Activated CD4-positive, alpha-beta T cell treated with anti-CD3 and anti-CD28 coated beads, Interleukin-2, amount 10 ng/mL, durations not matched to agents 24 days and 14 days (primary cell): ENCODE measurements at regions of chr10 and their contacts with region 1.

Region 1: DNA sequence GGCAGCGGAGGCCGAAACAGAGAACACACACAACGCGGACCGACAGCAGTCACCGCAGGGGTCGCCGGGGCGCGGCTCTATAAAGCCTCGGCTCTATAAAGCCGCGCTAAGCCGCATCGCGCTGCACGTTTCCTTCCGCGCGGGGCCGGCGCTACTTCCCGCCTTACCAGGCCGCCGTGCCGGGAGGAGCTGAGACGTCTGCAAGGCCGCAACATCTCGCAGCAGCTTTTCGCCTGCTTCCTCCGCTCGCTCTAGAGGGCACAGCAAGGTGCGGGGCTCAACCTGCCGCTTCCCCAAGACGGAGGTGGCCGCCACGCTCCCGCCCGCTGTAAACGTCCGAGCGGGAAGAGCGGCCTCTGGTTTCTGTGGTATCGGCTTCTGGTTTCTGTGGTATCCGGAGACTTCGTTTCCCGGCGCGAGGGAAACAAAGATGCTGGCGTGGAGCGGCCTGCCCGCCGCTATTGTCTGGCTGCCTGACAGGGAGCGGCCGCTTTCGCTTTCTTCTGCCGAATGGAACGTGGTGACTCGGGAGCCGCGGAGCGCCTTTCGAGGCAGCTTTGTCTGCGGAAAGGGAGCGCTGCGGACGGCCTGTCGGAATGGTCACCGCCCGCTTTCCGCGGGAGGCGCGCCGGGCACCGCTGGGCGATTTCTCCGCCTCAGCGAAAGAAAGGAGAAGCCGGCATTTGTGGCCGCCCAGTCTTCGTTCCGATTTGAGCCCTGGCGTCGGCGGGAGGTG is 91.8 kb downstream of the SPAG6 start:
- DNase-seq: peak; percentile 94
- H3K4me3 Mint-ChIP-seq: peak overlapping the region; percentile 93
- H3K27ac Mint-ChIP-seq: peak overlapping the region; percentile 98
- H3K4me1 Mint-ChIP-seq: peaks cover 47% of the 10 kb centered on the region
- H3K27me3 Mint-ChIP-seq: peaks cover 12% of the 10 kb centered on the region

Region 2: GRCh38 chr10:21525367-21526183 is 911.5 kb before region 1 on chr10 and contains the start of gene SKIDA1:
- intact Hi-C with region 1: loop called (anchors 10 kb)
- DNase-seq: peak; percentile 87
- H3K4me3 Mint-ChIP-seq: peak within 1 kb of the TSS; percentile 85
- H3K27ac Mint-ChIP-seq: peak within 1 kb of the TSS; percentile 95
- H3K4me1 Mint-ChIP-seq: peaks cover 29% of the 10 kb centered on the region
- H3K27me3 Mint-ChIP-seq: peaks cover 48% of the 10 kb centered on the region
- total RNA-seq, gene SKIDA1: 0.02 and 0.16 TPM in 2 replicates

Region 3: DNA sequence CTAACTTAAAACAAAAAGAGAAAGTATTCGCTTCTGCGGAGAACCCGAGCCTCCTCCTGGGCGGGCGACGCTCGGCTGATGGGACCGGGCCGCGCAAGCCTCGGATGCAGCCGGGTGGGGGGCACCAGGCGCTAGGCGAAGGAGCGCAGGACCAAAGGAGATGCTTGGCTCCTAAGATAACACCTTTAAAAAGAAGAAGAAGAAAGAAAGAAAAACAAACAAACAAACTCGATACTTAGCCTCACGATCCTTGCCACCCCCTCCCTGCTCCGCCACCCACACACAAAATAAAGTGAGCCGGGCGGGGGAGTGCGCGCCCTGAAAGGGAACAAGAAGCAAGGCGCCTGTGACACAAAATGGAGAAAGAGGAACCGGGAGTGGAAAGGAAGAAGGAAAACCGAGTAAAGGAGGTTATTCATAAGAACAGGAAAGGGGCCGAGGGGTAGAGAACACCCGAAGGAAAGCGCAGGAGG is 185.3 kb before region 1 on chr10:
- intact Hi-C with region 1: loop called (anchors 2 kb)
- DNase-seq: peak; percentile 91
- H3K4me3 Mint-ChIP-seq: peak overlapping the region; percentile 91
- H3K27ac Mint-ChIP-seq: peak overlapping the region; percentile 98
- H3K4me1 Mint-ChIP-seq: peaks cover 31% of the 10 kb centered on the region
- H3K27me3 Mint-ChIP-seq: peaks cover 14% of the 10 kb centered on the region

Region 4: DNA sequence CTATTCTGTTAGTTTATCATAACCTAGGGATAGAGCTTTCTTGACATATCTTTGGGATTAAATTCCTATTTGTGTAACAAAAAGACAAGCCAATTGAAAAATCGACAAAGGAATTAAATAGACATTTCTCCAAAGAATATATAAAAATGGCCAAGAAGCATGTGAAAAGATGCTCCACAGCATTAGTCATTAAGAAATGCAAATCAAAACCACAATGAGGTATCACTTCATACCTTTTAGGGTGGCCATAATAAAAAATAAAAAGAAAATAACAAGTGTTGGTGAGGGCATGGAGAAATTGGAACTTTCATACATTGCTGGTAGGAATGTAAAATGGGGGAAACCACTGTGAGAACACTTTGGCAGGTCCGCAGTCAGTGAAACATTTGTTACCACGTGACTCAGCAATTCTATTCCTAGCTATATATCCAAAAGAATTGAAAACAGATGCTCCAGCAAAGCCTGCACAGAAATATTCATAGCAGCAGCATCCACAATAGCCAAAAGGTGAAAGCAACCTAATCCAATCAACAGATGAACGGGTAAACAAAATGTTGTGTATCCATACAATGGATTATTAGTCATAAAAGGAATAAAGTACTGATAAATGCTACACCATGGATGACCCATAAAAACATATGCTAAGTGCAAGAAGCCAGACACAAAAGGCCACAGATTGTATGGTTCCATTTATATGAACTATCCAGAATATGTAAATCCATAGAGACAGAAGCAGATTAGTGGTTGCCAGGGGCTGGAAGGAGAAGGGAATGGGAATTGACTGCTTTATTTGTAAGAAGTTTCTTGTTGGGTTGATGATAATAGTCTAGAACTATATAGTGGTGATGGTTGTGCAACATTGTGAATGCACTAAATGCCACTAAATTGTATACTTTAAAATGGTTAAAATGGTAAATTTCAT is 71.1 kb before region 1 on chr10:
- intact Hi-C with region 1: loop called (anchors 1 kb)
- DNase-seq: no peak
- H3K4me3 Mint-ChIP-seq: no peak overlapping the region
- H3K27ac Mint-ChIP-seq: peak overlapping the region; percentile 67
- H3K4me1 Mint-ChIP-seq: peaks cover 36% of the 10 kb centered on the region
- H3K27me3 Mint-ChIP-seq: no peaks in the 10 kb centered on the region

Region 5: DNA sequence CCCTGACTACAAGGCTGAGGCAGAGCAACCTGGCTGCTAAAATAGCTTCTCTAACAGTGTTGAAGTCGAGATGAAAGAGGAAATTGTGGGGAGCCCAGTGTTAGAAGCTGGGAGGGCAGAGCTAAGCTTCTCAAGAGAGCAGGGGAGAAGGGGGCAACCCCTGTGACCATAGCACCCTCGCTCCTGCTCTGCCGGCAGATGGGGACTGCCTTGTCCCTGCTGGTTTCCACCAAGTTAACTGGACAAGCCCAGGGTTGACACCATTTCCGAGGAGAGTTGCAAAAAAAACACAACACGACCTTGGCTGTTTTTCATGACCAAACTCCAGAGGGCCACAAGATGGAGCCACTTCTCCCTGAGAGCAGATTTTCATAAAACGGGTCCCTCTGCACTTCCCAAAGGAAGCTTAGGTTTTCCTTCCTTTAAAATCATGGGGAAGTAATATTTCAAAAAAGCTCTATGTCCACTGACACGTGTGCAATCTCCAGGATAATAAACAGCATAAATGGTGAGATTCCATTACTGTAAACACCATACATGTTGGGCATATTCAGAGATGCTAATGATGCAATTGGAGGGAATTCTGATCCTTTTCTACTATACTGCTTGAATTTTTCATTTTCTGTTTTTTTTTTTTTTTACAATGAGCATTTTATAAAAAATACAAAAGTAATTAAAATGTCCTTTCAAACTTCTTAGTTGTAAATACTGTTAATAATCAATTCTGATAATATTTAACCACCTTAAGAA is 136.9 kb after region 1 on chr10:
- intact Hi-C with region 1: loop called (anchors 10 kb)
- DNase-seq: no peak
- H3K4me3 Mint-ChIP-seq: no peak overlapping the region
- H3K27ac Mint-ChIP-seq: no peak overlapping the region
- H3K4me1 Mint-ChIP-seq: peaks cover 36% of the 10 kb centered on the region
- H3K27me3 Mint-ChIP-seq: no peaks in the 10 kb centered on the region

Region 6: GRCh38 chr10:23368816-23369640 is 932.0 kb after region 1 on chr10:
- intact Hi-C with region 1: loop called (anchors 10 kb)
- DNase-seq: peak; percentile 84
- H3K4me3 Mint-ChIP-seq: peak overlapping the region; percentile 58
- H3K27ac Mint-ChIP-seq: peak overlapping the region; percentile 81
- H3K4me1 Mint-ChIP-seq: peaks cover 57% of the 10 kb centered on the region
- H3K27me3 Mint-ChIP-seq: no peaks in the 10 kb centered on the region